SK-N-SH (cell line): ENCODE measurements at regions of chr5 and their contacts with region 1.

Region 1: GRCh38 chr5:139787568-139788293 is 7.9 kb upstream of the PSD2 start:
- DNase-seq: peak; percentile 98
- H3K4me3 ChIP-seq: peak overlapping the region; percentile 56 to 80
- H3K27ac ChIP-seq: no peak overlapping the region; a peak in 1 of 4 replicates
- H3K4me1 ChIP-seq: peaks cover 0 to 3% of the 10 kb centered on the region in 2 experiments; a peak in 1 of 4 replicates
- H3K27me3 ChIP-seq: no peaks in the 10 kb centered on the region; the same call in 1 of the 2 replicates
- CTCF ChIP-seq: peak; percentile 87
- EP300 ChIP-seq: no peak
- RAD21 ChIP-seq: peak; percentile 96

Region 2: DNA sequence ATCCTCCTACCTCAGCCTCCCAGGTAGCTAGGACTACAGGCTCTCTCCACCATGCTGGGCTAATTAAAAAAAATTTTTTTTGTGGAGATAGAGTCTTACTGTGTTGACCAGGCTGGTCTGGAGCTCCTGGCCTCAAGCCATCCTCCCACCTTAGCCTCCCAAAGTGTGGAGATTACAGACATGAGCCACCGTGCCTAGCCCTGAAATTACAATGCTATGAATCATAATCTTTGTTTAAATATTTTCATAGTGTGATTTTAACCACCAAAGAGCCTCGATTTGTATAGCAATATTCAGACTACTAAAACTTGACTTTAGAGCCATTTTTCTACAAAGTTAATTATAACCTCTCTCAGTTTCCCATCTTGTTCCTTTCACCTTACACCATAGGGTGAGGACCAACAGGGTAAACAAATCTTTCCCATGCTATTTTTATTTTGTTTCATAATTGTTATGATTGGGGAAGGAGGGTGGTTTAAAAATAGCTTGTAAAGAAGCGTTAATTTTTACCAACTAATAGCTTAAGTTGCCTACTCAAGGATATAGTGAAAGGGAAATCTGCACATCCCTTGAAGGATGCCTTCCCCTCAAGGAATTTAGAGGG is 193.9 kb before region 1 on chr5:
- CTCF ChIA-PET with region 1: no interaction called
- POLR2A ChIA-PET with region 1: no interaction called
- DNase-seq: no peak
- H3K4me3 ChIP-seq: no peak overlapping the region
- H3K27ac ChIP-seq: peak overlapping the region in 1 of 2 experiments; percentile 55; a peak in 2 of 4 replicates
- H3K4me1 ChIP-seq: no peaks in the 10 kb centered on the region
- H3K27me3 ChIP-seq: no peaks in the 10 kb centered on the region
- CTCF ChIP-seq: no peak
- EP300 ChIP-seq: no peak
- RAD21 ChIP-seq: no peak

Region 3: DNA sequence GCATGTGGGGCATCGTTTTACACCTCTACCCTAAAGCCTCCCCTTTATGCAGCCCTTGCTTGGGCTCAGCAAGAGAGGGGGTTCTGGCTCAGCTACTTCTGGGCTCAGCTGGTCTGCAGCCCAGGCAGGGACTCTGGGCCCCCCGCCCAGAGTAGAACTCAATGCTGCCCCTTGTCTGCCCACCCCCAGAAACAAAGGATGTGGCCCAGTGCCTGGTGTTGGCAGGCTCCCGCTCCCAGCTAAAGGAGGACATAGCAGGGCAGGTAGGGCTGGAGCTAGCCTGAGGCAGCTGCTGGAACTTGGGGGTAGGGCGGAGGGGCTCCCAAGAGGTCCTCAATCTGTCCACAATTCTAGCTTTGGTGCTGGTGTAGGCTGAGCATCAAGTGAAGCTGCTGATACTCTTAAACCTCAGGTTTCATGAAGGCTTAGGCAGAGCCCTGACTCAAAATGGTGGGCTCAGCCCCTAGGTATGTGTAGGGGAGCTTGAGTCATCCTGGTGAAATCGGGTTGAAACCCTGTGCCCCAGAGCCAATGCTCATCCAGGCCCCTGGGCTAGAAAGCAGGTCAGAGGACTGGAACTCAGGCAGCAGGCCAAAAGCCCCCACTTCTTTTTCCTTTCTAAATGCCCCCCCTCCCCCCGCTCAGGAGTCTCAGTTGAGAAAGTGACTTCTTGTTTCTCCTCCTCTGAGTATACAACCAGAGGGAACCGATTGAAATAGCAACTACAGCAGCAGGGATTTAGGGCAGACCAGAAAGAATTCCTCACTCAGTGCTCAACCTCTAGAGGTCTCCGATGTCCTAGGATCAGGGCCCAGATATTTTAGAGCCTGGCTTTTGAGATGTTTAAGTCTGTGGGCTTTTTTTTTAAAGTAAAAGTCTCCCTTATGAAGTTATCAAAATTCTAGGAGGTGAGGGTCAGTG is 19.3 kb after region 1 on chr5:
- CTCF ChIA-PET with region 1: interaction called, 29 read pairs
- POLR2A ChIA-PET with region 1: no interaction called
- DNase-seq: no peak
- H3K4me3 ChIP-seq: no peak overlapping the region
- H3K27ac ChIP-seq: no peak overlapping the region
- H3K4me1 ChIP-seq: no peaks in the 10 kb centered on the region
- H3K27me3 ChIP-seq: peaks cover 15% of the 10 kb centered on the region
- CTCF ChIP-seq: no peak
- EP300 ChIP-seq: no peak
- RAD21 ChIP-seq: peak; percentile 26; the same call in 1 of the 2 replicates

Region 4: DNA sequence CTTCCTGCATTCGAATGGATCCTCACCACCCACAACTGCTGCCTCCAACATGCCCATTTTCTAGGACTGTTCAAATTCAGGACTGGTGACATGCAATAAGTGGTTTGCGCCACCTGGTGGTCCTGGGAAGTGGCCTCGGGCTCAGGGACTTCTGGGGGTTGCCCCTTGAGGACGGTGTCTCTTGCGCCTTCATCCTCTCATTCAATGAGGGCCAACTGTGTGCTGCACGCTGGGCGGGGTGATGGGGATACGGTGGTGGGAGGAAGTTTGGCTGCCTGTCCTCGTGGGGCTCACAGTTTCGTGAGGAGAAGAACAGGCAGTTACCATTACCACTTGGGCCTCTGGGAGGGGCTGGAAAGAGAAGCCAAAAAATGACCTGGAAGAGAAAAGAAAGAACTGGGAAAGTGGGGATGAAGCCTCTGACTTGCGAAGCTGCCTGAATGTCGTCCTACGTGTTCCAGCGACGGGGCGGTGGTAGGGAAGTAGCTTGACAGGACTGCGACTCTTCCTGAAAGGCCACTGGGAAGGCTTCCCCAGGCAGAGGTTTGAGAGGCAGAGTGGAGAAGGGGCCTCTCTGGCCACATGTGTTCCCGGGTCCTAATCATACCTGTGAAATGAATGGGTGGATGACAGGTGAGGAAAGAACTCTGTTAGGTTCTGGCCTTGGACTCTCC is 56.9 kb after region 1 on chr5:
- CTCF ChIA-PET with region 1: interaction called, 92 read pairs
- POLR2A ChIA-PET with region 1: no interaction called
- DNase-seq: peak; percentile 81
- H3K4me3 ChIP-seq: no peak overlapping the region; a peak in 1 of 4 replicates
- H3K27ac ChIP-seq: no peak overlapping the region
- H3K4me1 ChIP-seq: peaks cover 0 to 2% of the 10 kb centered on the region in 2 experiments; a peak in 1 of 4 replicates
- H3K27me3 ChIP-seq: no peaks in the 10 kb centered on the region
- CTCF ChIP-seq: peak; percentile 84
- EP300 ChIP-seq: no peak
- RAD21 ChIP-seq: peak; percentile 74

Region 5: DNA sequence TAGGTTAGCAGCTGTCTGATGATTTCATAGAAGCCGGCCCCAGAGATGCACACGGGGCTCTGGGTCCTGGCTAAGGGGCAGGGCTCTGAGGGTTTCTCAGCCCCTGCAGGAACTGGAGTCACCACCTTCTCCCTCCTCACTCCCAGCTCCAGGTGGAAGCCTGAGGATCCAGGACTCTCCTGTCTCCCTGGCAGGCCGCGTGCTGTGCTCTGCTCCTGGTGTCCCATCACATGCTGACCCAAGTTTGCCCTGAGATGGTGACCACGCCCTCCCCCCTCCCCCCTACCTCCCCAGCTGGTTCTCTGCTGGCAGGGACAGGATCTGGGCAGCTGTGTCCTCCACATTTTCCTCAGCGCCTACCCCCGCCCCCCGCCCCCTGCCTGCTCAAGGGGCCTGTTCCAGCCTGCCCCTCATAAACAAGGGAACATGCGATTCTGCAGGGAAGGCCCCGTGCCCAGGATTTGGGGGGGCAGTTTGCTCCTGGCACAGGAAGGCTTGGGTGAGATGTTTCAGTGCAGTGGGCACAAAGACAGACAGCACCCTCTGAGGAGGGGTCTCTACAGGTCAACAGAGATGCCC is 95.3 kb after region 1 on chr5:
- CTCF ChIA-PET with region 1: interaction called, 33 read pairs
- POLR2A ChIA-PET with region 1: no interaction called
- DNase-seq: peak; percentile 55
- H3K4me3 ChIP-seq: no peak overlapping the region
- H3K27ac ChIP-seq: peak overlapping the region in 1 of 2 experiments; percentile 44; a peak in 1 of 4 replicates
- H3K4me1 ChIP-seq: peaks cover 0 to 47% of the 10 kb centered on the region in 2 experiments; a peak in 1 of 4 replicates
- H3K27me3 ChIP-seq: no peaks in the 10 kb centered on the region
- CTCF ChIP-seq: no peak
- EP300 ChIP-seq: no peak
- RAD21 ChIP-seq: no peak

Region 6: GRCh38 chr5:139955053-139955605 is 167.4 kb after region 1 on chr5:
- CTCF ChIA-PET with region 1: interaction called, 26 read pairs
- POLR2A ChIA-PET with region 1: no interaction called
- DNase-seq: no peak
- H3K4me3 ChIP-seq: no peak overlapping the region
- H3K27ac ChIP-seq: no peak overlapping the region
- H3K4me1 ChIP-seq: peaks cover 0 to 28% of the 10 kb centered on the region in 2 experiments; a peak in 1 of 4 replicates
- H3K27me3 ChIP-seq: no peaks in the 10 kb centered on the region
- CTCF ChIP-seq: no peak
- EP300 ChIP-seq: no peak
- RAD21 ChIP-seq: no peak